Lower leg skin (tissue), 4 donors: ENCODE measurements at regions of chr15 and their contacts with region 1.

Region 1: GRCh38 chr15:57337868-57338411 is 38.4 kb upstream of the CGNL1 start:
- DNase-seq: peak in 1 of 2 donors; percentile 90
- H3K4me3 ChIP-seq: no peak overlapping the region
- CTCF ChIP-seq: no peak
- POLR2A ChIP-seq: no peak

Region 2: DNA sequence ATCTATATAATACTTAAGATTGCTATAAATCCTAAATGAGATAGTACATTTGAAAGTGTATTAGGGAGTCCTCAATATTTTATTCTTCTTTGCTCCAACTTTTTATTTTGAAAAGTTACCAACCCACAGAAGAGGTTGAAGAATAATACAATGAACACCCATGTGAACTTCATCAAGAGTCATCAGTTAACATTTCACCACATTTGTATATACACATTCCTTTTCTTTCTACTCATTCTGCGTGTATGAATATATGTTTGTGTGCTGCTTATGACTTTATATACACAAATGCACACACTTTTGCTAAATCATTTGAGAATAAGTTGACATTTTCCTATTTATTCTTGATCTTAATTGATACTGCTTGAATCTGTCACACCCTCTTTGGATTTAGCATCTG is 154.9 kb before region 1 on chr15:
- intact Hi-C with region 1: no loop called
- DNase-seq: no peak
- H3K4me3 ChIP-seq: no peak overlapping the region
- CTCF ChIP-seq: no peak
- POLR2A ChIP-seq: no peak

Region 3: GRCh38 chr15:57284535-57284934 is 53.4 kb before region 1 on chr15:
- intact Hi-C with region 1: no loop called
- DNase-seq: no peak
- H3K4me3 ChIP-seq: no peak overlapping the region
- CTCF ChIP-seq: no peak
- POLR2A ChIP-seq: no peak

Region 4: DNA sequence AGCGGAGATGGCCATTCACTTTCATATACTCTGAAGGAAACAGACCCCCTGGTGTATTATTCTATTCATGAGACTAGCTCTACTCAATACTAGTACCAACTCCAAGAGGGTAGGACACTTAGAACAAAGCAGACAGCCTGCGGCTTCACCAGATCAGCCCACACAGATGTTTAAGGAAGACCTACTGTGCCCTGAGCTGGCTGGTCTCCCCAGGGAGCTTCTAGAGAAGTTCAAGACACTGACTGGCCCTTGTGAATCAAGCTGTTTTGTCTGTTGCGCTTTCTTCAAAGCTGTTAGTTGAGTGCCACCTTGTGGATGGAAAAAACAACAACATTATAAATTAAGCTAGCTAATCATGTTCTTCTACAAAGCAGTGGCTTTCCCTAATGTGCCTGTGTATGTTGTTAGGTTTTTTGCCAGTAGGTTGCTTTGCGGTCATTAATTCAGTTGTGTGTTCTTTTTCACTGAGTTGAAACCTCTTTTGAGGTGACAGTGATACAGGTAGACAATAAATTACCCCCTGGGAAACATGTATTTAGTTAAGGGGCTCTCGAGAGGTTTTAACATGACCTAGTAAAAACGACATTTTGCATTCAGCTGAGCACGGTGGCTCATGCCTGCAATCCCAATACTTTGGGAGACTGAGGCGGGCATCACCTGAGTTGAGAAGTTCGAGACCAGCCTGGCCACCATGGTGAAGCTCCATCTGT is 189.6 kb after region 1 on chr15:
- intact Hi-C with region 1: loop called (anchors 5 kb)
- DNase-seq: no peak
- H3K4me3 ChIP-seq: no peak overlapping the region
- CTCF ChIP-seq: peak in 1 of 3 donors; percentile 19
- POLR2A ChIP-seq: no peak